Heart left ventricle (tissue), 16 donors: ENCODE measurements at regions of chr10 and their contacts with region 1.

Region 1: GRCh38 chr10:76902949-76903348 is 734.7 kb downstream of the KCNMA1 start:
- DNase-seq: peak; percentile 50 to 76 (median 67)
- ATAC-seq: peak; percentile 79 to 83 (median 80)
- H3K4me3 ChIP-seq: no peak overlapping the region
- H3K27ac ChIP-seq: no peak overlapping the region
- H3K4me1 ChIP-seq: peaks cover 0 to 4% (median 0%) of the 10 kb centered on the region in 12 donors
- H3K27me3 ChIP-seq: no peaks in the 10 kb centered on the region
- CTCF ChIP-seq: peak; percentile 18 to 67 (median 48)
- POLR2A ChIP-seq: no peak

Region 2: GRCh38 chr10:76558586-76558985 is 344.4 kb before region 1 on chr10:
- intact Hi-C with region 1: loop called in 3 of 10 experiments (anchors 10 kb)
- DNase-seq: no peak
- ATAC-seq: no peak
- H3K4me3 ChIP-seq: no peak overlapping the region
- H3K27ac ChIP-seq: peak overlapping the region in 1 of 12 donors; percentile 35
- H3K4me1 ChIP-seq: peaks cover 0 to 35% (median 10%) of the 10 kb centered on the region in 12 donors
- H3K27me3 ChIP-seq: no peaks in the 10 kb centered on the region
- CTCF ChIP-seq: no peak
- POLR2A ChIP-seq: no peak

Region 3: GRCh38 chr10:76624470-76624869 is 278.5 kb before region 1 on chr10:
- intact Hi-C with region 1: loop called in 1 of 10 experiments (anchors 10 kb)
- DNase-seq: no peak
- ATAC-seq: no peak
- H3K4me3 ChIP-seq: no peak overlapping the region
- H3K27ac ChIP-seq: no peak overlapping the region
- H3K4me1 ChIP-seq: peaks cover 0 to 17% (median 8%) of the 10 kb centered on the region in 12 donors
- H3K27me3 ChIP-seq: no peaks in the 10 kb centered on the region
- CTCF ChIP-seq: no peak
- POLR2A ChIP-seq: no peak